Activated CD4-positive, alpha-beta T cell treated with anti-CD3 and anti-CD28 coated beads, Interleukin-2, amount 10 ng/mL, durations not matched to agents 24 days and 14 days (primary cell): ENCODE measurements at regions of chr16 and their contacts with region 1.

Region 1: GRCh38 chr16:57462209-57462977 is at the start of gene POLR2C:
- DNase-seq: peak; percentile 98
- H3K4me3 Mint-ChIP-seq: peak within 1 kb of the TSS; percentile 96
- H3K27ac Mint-ChIP-seq: peak within 1 kb of the TSS; percentile 100
- H3K4me1 Mint-ChIP-seq: peaks cover 27% of the 10 kb centered on the region
- H3K27me3 Mint-ChIP-seq: no peaks in the 10 kb centered on the region
- total RNA-seq, gene POLR2C: 88.5 and 90.7 TPM in 2 replicates

Region 2: GRCh38 chr16:57447186-57447962 is 15.0 kb before region 1 on chr16 and contains the starts of genes CIAPIN1 and COQ9:
- intact Hi-C with region 1: loop called (anchors 1 kb)
- DNase-seq: peak; percentile 98
- H3K4me3 Mint-ChIP-seq: peak within 1 kb of the TSS; percentile 95
- H3K27ac Mint-ChIP-seq: peak within 1 kb of the TSS; percentile 92
- H3K4me1 Mint-ChIP-seq: peaks cover 24% of the 10 kb centered on the region
- H3K27me3 Mint-ChIP-seq: no peaks in the 10 kb centered on the region
- total RNA-seq, gene CIAPIN1: 85.4 TPM in 2 replicates
- total RNA-seq, gene COQ9: 55.2 and 56.7 TPM in 2 replicates

Region 3: GRCh38 chr16:57475711-57476339 is 13.4 kb after region 1 on chr16:
- intact Hi-C with region 1: loop called (anchors 1 kb)
- DNase-seq: peak; percentile 95
- H3K4me3 Mint-ChIP-seq: peak overlapping the region; percentile 55
- H3K27ac Mint-ChIP-seq: peak overlapping the region; percentile 83
- H3K4me1 Mint-ChIP-seq: peaks cover 14% of the 10 kb centered on the region
- H3K27me3 Mint-ChIP-seq: peaks cover 2% of the 10 kb centered on the region